Naive thymus-derived CD4-positive, alpha-beta T cell (primary cell): ENCODE measurements at regions of chr6 and their contacts with region 1.

Region 1: GRCh38 chr6:159654483-159655098 is 38.5 kb downstream of the SOD2 start:
- DNase-seq: peak in 6 of 9 donors; percentile 8 to 53 (median 47)
- ATAC-seq: peak; percentile 60
- H3K4me3 ChIP-seq: no peak overlapping the region
- H3K4me3 Mint-ChIP-seq: no peak overlapping the region
- H3K27ac ChIP-seq: no peak overlapping the region
- H3K27ac Mint-ChIP-seq: no peak overlapping the region
- H3K4me1 ChIP-seq: no peaks in the 10 kb centered on the region
- H3K4me1 Mint-ChIP-seq: peaks cover 0 to 6% (median 0%) of the 10 kb centered on the region in 7 donors
- H3K27me3 ChIP-seq: no peaks in the 10 kb centered on the region
- H3K27me3 Mint-ChIP-seq: peaks cover 0 to 2% (median 0%) of the 10 kb centered on the region in 5 donors

Region 2: DNA sequence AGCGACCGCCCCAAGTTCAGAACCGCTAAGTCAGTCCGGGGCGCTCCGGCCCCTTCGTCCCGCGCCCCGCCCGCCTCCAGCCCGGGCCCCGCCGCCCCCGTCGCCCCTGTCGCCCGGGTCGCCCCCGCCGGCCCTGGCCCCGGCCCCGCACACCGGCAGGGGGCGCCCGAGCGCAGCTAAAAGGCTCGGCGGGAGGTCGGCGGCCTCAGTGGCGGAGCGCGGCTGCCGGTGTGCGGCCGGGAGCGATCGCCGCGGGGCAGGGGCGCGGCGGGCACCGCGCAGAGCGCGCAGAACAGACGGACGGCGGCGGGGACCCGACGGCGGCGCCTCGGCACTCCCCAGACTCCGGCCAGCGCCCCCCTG is 485.4 kb before region 1 on chr6 and contains the start of gene FNDC1:
- CTCF ChIA-PET with region 1: interaction called, 15 read pairs
- POLR2A ChIA-PET with region 1: no interaction called
- intact Hi-C with region 1: loop called (anchors 1 to 2 kb)
- DNase-seq: peak in 7 of 9 donors; percentile 24 to 79 (median 46)
- ATAC-seq: peak; percentile 85
- H3K4me3 ChIP-seq: no peak within 1 kb of the TSS
- H3K4me3 Mint-ChIP-seq: peak within 1 kb of the TSS; percentile 58 to 82 (median 68)
- H3K27ac ChIP-seq: no peak within 1 kb of the TSS
- H3K27ac Mint-ChIP-seq: no peak within 1 kb of the TSS
- H3K4me1 ChIP-seq: peaks cover 0 to 4% of the 10 kb centered on the region in 2 donors
- H3K4me1 Mint-ChIP-seq: peaks cover 12 to 26% (median 18%) of the 10 kb centered on the region in 7 donors
- H3K27me3 ChIP-seq: peaks cover 3 to 13% of the 10 kb centered on the region in 2 donors
- H3K27me3 Mint-ChIP-seq: peaks cover 83 to 89% (median 88%) of the 10 kb centered on the region in 5 donors
- total RNA-seq, gene FNDC1: not detected

Region 3: GRCh38 chr6:159252955-159253508 is 401.6 kb before region 1 on chr6:
- CTCF ChIA-PET with region 1: no interaction called
- POLR2A ChIA-PET with region 1: no interaction called
- intact Hi-C with region 1: loop called in 1 of 2 experiments (anchors 10 kb)
- DNase-seq: peak in 4 of 9 donors; percentile 4 to 14 (median 12)
- ATAC-seq: peak; percentile 69
- H3K4me3 ChIP-seq: no peak overlapping the region
- H3K4me3 Mint-ChIP-seq: peak overlapping the region in 1 of 10 donors; percentile 21
- H3K27ac ChIP-seq: no peak overlapping the region
- H3K27ac Mint-ChIP-seq: no peak overlapping the region
- H3K4me1 ChIP-seq: no peaks in the 10 kb centered on the region
- H3K4me1 Mint-ChIP-seq: peaks cover 0 to 5% (median 0%) of the 10 kb centered on the region in 7 donors
- H3K27me3 ChIP-seq: no peaks in the 10 kb centered on the region
- H3K27me3 Mint-ChIP-seq: peaks cover 2 to 32% (median 16%) of the 10 kb centered on the region in 5 donors